ENCODE measurements at regions of chr6 and their contacts with region 1.

Region 1: GRCh38 chr6:159789377-159790148 is at the start of gene TCP1:
- DNase-seq: peak; percentile 100
- total RNA-seq, gene TCP1: 116 to 137 TPM

Region 2: DNA sequence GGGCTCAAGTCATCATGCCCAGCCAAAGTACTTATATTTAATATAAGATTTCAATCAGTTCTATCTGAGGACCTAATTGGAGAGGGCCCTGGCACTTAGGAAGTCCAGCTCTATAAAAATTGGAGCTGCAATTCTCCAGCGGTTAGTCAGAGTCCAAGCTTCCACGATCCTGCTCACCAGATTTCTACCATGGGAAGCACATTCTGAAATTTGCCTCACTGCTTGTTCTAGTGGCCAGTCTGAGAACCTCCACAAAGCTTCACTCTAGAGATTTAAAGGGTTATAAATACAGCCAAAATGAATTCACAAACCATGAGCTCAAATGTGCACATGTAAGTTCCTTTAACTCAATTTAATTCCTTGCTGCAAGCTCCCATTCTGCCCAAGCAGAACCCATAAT is 44.0 kb after region 1 on chr6:
- intact Hi-C with region 1: loop called (anchors 5 kb)
- DNase-seq: no peak